T-cell (primary cell): ENCODE measurements at regions of chr4 and their contacts with region 1.

Region 1: GRCh38 chr4:106583567-106583966 is 215.0 kb upstream of the GIMD1 start:
- DNase-seq: no peak
- ATAC-seq: no peak
- H3K4me3 ChIP-seq: no peak overlapping the region
- H3K4me3 Mint-ChIP-seq: no peak overlapping the region
- H3K27ac ChIP-seq: no peak overlapping the region
- H3K27ac Mint-ChIP-seq: no peak overlapping the region
- H3K4me1 ChIP-seq: no peaks in the 10 kb centered on the region
- H3K4me1 Mint-ChIP-seq: no peaks in the 10 kb centered on the region
- H3K27me3 ChIP-seq: no peaks in the 10 kb centered on the region
- H3K27me3 Mint-ChIP-seq: no peaks in the 10 kb centered on the region

Region 2: DNA sequence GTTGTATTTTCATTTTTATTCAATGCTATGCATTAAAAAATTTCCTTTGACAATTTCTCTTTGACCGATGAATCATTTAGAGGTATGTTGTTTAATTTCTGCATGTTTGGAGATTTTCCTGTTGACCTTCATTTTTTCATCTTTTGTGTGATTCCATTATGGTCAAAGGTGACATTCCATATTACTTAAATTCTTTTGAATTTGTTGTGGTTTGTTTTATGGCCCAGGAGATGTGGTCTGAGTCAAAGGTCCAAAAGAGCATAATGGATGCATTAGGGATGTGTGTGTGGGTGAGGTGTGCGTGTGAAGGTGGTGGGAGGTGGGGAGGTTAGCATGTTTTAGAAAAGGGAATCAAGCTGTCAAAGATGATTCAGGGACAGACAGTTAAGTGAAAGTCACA is 139.0 kb before region 1 on chr4:
- CTCF ChIA-PET with region 1: no interaction called
- POLR2A ChIA-PET with region 1: interaction called in 1 of 2 experiments, 11 read pairs
- DNase-seq: no peak
- ATAC-seq: no peak
- H3K4me3 ChIP-seq: no peak overlapping the region
- H3K4me3 Mint-ChIP-seq: no peak overlapping the region
- H3K27ac ChIP-seq: no peak overlapping the region
- H3K27ac Mint-ChIP-seq: no peak overlapping the region
- H3K4me1 ChIP-seq: no peaks in the 10 kb centered on the region
- H3K4me1 Mint-ChIP-seq: no peaks in the 10 kb centered on the region
- H3K27me3 ChIP-seq: no peaks in the 10 kb centered on the region
- H3K27me3 Mint-ChIP-seq: peaks cover 0 to 5% of the 10 kb centered on the region in 2 donors

Region 3: GRCh38 chr4:106717091-106717490 is 133.5 kb after region 1 on chr4:
- CTCF ChIA-PET with region 1: no interaction called
- POLR2A ChIA-PET with region 1: no interaction called
- DNase-seq: no peak
- ATAC-seq: no peak
- H3K4me3 ChIP-seq: no peak overlapping the region
- H3K4me3 Mint-ChIP-seq: no peak overlapping the region
- H3K27ac ChIP-seq: no peak overlapping the region
- H3K27ac Mint-ChIP-seq: no peak overlapping the region
- H3K4me1 ChIP-seq: no peaks in the 10 kb centered on the region
- H3K4me1 Mint-ChIP-seq: no peaks in the 10 kb centered on the region
- H3K27me3 ChIP-seq: no peaks in the 10 kb centered on the region
- H3K27me3 Mint-ChIP-seq: no peaks in the 10 kb centered on the region